Uterus (tissue), 4 donors: ENCODE measurements at regions of chr1 and their contacts with region 1.

Region 1: DNA sequence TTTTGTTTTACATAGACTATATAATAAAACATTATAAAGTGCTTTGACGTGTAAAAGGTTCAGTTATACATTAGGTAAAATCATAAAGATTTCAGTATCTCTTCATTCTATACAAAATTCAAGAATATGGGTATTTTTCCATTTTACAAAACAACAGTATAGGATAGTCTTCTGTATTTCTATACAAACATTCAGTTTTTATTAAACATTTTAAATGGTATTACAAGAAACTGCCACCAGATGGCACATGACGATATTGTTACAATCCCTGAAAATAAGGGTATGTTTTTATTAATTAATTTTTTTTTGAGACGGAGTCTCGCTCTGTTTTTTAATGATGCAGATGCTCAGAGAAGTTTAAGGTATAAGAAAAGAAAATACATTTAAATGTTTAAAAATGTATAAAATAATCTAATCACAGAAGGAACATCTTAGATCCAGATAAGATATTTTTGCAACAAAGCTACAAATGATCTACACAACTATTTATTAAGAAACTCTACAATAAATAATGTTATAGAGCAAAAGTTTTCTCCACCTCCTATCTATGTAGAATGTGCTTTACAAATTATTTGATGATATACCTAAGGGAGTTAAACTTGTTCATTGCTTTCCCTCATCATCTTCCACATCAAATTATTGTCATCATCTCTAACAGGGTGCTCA is 23.5 kb upstream of the RSBN1 start:
- DNase-seq: no peak
- H3K4me3 ChIP-seq: no peak overlapping the region
- H3K27ac ChIP-seq: no peak overlapping the region
- H3K4me1 ChIP-seq: no peaks in the 10 kb centered on the region
- H3K27me3 ChIP-seq: no peaks in the 10 kb centered on the region
- CTCF ChIP-seq: peak; percentile 49 to 71 (median 60)
- POLR2A ChIP-seq: no peak

Region 2: GRCh38 chr1:113219377-113219776 is 616.4 kb before region 1 on chr1:
- intact Hi-C with region 1: no loop called
- DNase-seq: no peak
- H3K4me3 ChIP-seq: no peak overlapping the region
- H3K27ac ChIP-seq: no peak overlapping the region
- H3K4me1 ChIP-seq: no peaks in the 10 kb centered on the region
- H3K27me3 ChIP-seq: no peaks in the 10 kb centered on the region
- CTCF ChIP-seq: no peak
- POLR2A ChIP-seq: no peak

Region 3: GRCh38 chr1:114299331-114299975 is 463.7 kb after region 1 on chr1:
- intact Hi-C with region 1: loop called (anchors 10 kb)
- DNase-seq: peak; percentile 29 to 38
- H3K4me3 ChIP-seq: no peak overlapping the region
- H3K27ac ChIP-seq: peak overlapping the region; percentile 47 to 61
- H3K4me1 ChIP-seq: no peaks in the 10 kb centered on the region
- H3K27me3 ChIP-seq: no peaks in the 10 kb centered on the region
- CTCF ChIP-seq: peak in 3 of 4 experiments; percentile 19 to 34 (median 30)
- POLR2A ChIP-seq: no peak